CD8-positive, alpha-beta T cell (primary cell): ENCODE measurements at regions of chr10 and their contacts with region 1.

Region 1: GRCh38 chr10:100338434-100339036 is 8.5 kb upstream of the SCD start:
- DNase-seq: peak; percentile 67 to 86 (median 81)
- ATAC-seq: peak; percentile 93
- H3K4me3 ChIP-seq: no peak overlapping the region
- H3K4me3 Mint-ChIP-seq: no peak overlapping the region
- H3K27ac ChIP-seq: no peak overlapping the region
- H3K27ac Mint-ChIP-seq: no peak overlapping the region
- H3K4me1 ChIP-seq: no peaks in the 10 kb centered on the region
- H3K4me1 Mint-ChIP-seq: no peaks in the 10 kb centered on the region
- H3K27me3 ChIP-seq: no peaks in the 10 kb centered on the region
- H3K27me3 Mint-ChIP-seq: peaks cover 5% of the 10 kb centered on the region
- CTCF ChIP-seq: peak; percentile 77

Region 2: GRCh38 chr10:100327007-100327717 is 11.4 kb before region 1 on chr10:
- CTCF ChIA-PET with region 1: interaction called, 16 read pairs
- POLR2A ChIA-PET with region 1: no interaction called
- intact Hi-C with region 1: no loop called
- DNase-seq: peak in 1 of 9 experiments; percentile 62
- ATAC-seq: peak; percentile 89
- H3K4me3 ChIP-seq: no peak overlapping the region
- H3K4me3 Mint-ChIP-seq: no peak overlapping the region
- H3K27ac ChIP-seq: no peak overlapping the region
- H3K27ac Mint-ChIP-seq: peak overlapping the region; percentile 75
- H3K4me1 ChIP-seq: peaks cover 15% of the 10 kb centered on the region
- H3K4me1 Mint-ChIP-seq: peaks cover 10% of the 10 kb centered on the region
- H3K27me3 ChIP-seq: peaks cover 0 to 4% of the 10 kb centered on the region in 2 experiments
- H3K27me3 Mint-ChIP-seq: peaks cover 11% of the 10 kb centered on the region
- CTCF ChIP-seq: no peak

Region 3: GRCh38 chr10:100373298-100374136 is 35.0 kb after region 1 on chr10:
- CTCF ChIA-PET with region 1: interaction called, 4 read pairs
- POLR2A ChIA-PET with region 1: no interaction called
- intact Hi-C with region 1: loop called in 1 of 2 experiments (anchors 1 kb)
- DNase-seq: peak; percentile 66 to 93 (median 84)
- ATAC-seq: peak; percentile 63
- H3K4me3 ChIP-seq: peak overlapping the region; percentile 74 to 91
- H3K4me3 Mint-ChIP-seq: no peak overlapping the region
- H3K27ac ChIP-seq: peak overlapping the region; percentile 90 to 94
- H3K27ac Mint-ChIP-seq: no peak overlapping the region
- H3K4me1 ChIP-seq: peaks cover 44% of the 10 kb centered on the region
- H3K4me1 Mint-ChIP-seq: peaks cover 31% of the 10 kb centered on the region
- H3K27me3 ChIP-seq: no peaks in the 10 kb centered on the region
- H3K27me3 Mint-ChIP-seq: no peaks in the 10 kb centered on the region
- CTCF ChIP-seq: no peak

Region 4: GRCh38 chr10:100438674-100439315 is 100.3 kb after region 1 on chr10:
- CTCF ChIA-PET with region 1: interaction called, 225 read pairs
- POLR2A ChIA-PET with region 1: no interaction called
- intact Hi-C with region 1: loop called (anchors 1 kb)
- DNase-seq: no peak
- ATAC-seq: no peak
- H3K4me3 ChIP-seq: no peak overlapping the region
- H3K4me3 Mint-ChIP-seq: no peak overlapping the region
- H3K27ac ChIP-seq: no peak overlapping the region
- H3K27ac Mint-ChIP-seq: no peak overlapping the region
- H3K4me1 ChIP-seq: no peaks in the 10 kb centered on the region
- H3K4me1 Mint-ChIP-seq: peaks cover 2% of the 10 kb centered on the region
- H3K27me3 ChIP-seq: no peaks in the 10 kb centered on the region
- H3K27me3 Mint-ChIP-seq: no peaks in the 10 kb centered on the region
- CTCF ChIP-seq: no peak